ENCODE measurements at regions of chr6 and their contacts with region 1.

Region 1: DNA sequence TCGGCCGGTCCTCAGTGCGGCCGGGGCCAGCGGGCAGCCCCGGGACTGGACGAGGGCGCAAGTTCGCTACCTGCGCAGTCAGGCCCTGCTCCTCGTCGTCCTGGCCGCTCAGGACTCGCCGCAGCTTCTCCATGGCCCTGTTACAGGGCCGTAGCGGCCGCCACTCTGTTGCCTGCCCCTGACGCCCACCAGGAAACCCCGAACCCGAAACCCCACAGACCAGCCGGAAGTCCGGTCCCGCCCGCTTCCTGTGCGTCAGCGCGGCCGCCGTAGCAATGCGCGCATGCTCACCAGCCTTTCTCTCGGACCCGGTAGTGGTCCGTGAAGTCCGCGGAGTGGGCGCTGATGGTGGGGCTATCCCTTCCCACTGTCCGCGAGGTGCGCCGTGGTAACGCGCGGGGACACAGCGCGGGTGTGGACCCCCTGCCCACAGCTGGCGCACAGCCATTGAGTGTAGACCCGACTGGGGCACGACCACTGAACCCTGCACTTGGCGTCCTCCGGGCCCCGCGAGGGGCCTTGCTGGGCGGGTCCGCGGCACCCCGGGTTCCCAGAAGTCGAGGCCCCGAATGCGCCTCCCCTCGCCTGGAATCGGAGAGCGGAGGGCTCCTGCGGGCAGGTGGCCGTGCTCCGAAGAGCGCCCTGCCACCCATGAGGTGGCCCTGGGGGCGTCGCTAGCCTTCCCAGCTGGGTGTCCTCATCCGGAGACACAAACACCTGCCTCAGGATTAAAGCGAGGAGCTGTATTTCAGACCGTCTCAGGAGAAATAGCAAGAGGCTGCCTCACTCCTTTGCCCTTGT is at the start of gene SFT2D1:
- DNase-seq: peak; percentile 89
- H3K4me3 ChIP-seq: peak within 1 kb of the TSS; percentile 79 to 99 (median 93)
- H3K27ac ChIP-seq: peak within 1 kb of the TSS; percentile 95
- H3K4me1 ChIP-seq: peaks cover 13% of the 10 kb centered on the region
- H3K27me3 ChIP-seq: peaks cover 2 to 4% of the 10 kb centered on the region in 2 experiments
- CTCF ChIP-seq: no peak
- POLR2A ChIP-seq: peak; percentile 96
- total RNA-seq, gene SFT2D1: 21.2 and 22.9 TPM in 2 replicates

Region 2: DNA sequence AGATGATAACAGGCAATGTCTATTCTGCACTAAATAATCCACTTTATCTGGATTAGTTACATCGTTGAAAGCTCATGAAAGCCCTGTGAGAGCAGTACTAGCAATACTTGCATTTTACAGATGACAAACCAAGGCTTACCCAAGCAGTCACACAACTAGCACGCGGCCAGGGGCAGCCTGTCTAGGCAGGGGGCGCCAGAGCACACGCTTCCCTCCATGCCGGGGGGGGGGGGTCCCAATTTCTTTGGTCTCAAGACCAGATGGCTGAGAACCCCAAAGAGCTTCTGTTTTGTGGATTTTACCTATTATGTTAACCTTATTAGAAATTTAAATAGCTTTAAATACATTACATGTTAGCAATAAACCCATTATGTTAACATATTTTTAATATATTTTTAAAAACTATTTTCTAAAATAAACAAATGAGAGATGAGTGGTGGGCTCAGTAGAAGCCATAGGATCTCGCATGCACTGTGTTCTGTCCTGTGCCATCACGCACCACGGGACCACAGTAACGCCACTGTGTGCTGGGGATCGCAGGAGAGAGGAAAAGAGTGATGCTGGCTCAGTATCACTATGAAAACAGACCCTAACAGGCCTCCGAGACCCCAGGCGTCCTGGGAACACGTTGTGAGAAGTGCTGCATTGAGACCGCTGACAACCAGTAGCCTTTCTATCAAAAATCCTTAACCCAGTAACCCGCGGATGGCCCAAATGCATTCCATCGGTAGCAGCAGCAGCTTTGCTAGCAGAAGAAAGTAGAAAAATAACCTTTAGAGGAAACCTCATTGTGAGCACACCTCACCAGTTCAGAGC is 29.1 kb before region 1 on chr6:
- CTCF ChIA-PET with region 1: interaction called, 5 read pairs
- POLR2A ChIA-PET with region 1: interaction called, 3 read pairs
- dilution Hi-C with region 1: no loop called
- intact Hi-C with region 1: loop called (anchors 1 kb)
- DNase-seq: peak; percentile 45
- H3K4me3 ChIP-seq: no peak overlapping the region
- H3K27ac ChIP-seq: no peak overlapping the region
- H3K4me1 ChIP-seq: no peaks in the 10 kb centered on the region
- H3K27me3 ChIP-seq: peaks cover 19 to 23% of the 10 kb centered on the region in 2 experiments
- CTCF ChIP-seq: peak; percentile 73
- POLR2A ChIP-seq: no peak

Region 3: GRCh38 chr6:166365221-166365620 is 22.7 kb after region 1 on chr6:
- CTCF ChIA-PET with region 1: interaction called, 3 read pairs
- POLR2A ChIA-PET with region 1: no interaction called
- dilution Hi-C with region 1: no loop called
- intact Hi-C with region 1: loop called (anchors 1 kb)
- DNase-seq: peak; percentile 85
- H3K4me3 ChIP-seq: no peak overlapping the region
- H3K27ac ChIP-seq: peak overlapping the region; percentile 27
- H3K4me1 ChIP-seq: peaks cover 18% of the 10 kb centered on the region
- H3K27me3 ChIP-seq: peaks cover 0 to 2% of the 10 kb centered on the region in 2 experiments
- CTCF ChIP-seq: no peak
- POLR2A ChIP-seq: no peak